CD4-positive, alpha-beta T cell (primary cell): ENCODE measurements at regions of chr16 and their contacts with region 1.

Region 1: GRCh38 chr16:4616047-4616811 is 1.5 kb upstream of the UBALD1 start:
- DNase-seq: peak; percentile 97 to 100 (median 98)
- ATAC-seq: peak; percentile 89
- H3K4me3 ChIP-seq: peak overlapping the region; percentile 76
- H3K4me3 Mint-ChIP-seq: peak overlapping the region; percentile 99
- H3K27ac ChIP-seq: peak overlapping the region; percentile 90 to 97
- H3K27ac Mint-ChIP-seq: peak overlapping the region; percentile 98
- H3K4me1 ChIP-seq: peaks cover 59% of the 10 kb centered on the region
- H3K4me1 Mint-ChIP-seq: peaks cover 26% of the 10 kb centered on the region
- H3K27me3 ChIP-seq: no peaks in the 10 kb centered on the region
- H3K27me3 Mint-ChIP-seq: no peaks in the 10 kb centered on the region
- CTCF ChIP-seq: peak; percentile 65

Region 2: GRCh38 chr16:3134564-3135417 is 1481.4 kb before region 1 on chr16 and contains the start of gene ZNF213:
- CTCF ChIA-PET with region 1: no interaction called
- POLR2A ChIA-PET with region 1: no interaction called
- intact Hi-C with region 1: loop called in 1 of 2 experiments (anchors 10 kb)
- DNase-seq: peak; percentile 79 to 99 (median 89)
- ATAC-seq: peak; percentile 97
- H3K4me3 ChIP-seq: peak within 1 kb of the TSS; percentile 84
- H3K4me3 Mint-ChIP-seq: peak within 1 kb of the TSS; percentile 99
- H3K27ac ChIP-seq: peak within 1 kb of the TSS; percentile 91 to 92
- H3K27ac Mint-ChIP-seq: peak within 1 kb of the TSS; percentile 94
- H3K4me1 ChIP-seq: peaks cover 29% of the 10 kb centered on the region
- H3K4me1 Mint-ChIP-seq: peaks cover 38% of the 10 kb centered on the region
- H3K27me3 ChIP-seq: no peaks in the 10 kb centered on the region
- H3K27me3 Mint-ChIP-seq: no peaks in the 10 kb centered on the region
- CTCF ChIP-seq: no peak
- total RNA-seq, gene ZNF213: 1.6 to 2.2 TPM

Region 3: DNA sequence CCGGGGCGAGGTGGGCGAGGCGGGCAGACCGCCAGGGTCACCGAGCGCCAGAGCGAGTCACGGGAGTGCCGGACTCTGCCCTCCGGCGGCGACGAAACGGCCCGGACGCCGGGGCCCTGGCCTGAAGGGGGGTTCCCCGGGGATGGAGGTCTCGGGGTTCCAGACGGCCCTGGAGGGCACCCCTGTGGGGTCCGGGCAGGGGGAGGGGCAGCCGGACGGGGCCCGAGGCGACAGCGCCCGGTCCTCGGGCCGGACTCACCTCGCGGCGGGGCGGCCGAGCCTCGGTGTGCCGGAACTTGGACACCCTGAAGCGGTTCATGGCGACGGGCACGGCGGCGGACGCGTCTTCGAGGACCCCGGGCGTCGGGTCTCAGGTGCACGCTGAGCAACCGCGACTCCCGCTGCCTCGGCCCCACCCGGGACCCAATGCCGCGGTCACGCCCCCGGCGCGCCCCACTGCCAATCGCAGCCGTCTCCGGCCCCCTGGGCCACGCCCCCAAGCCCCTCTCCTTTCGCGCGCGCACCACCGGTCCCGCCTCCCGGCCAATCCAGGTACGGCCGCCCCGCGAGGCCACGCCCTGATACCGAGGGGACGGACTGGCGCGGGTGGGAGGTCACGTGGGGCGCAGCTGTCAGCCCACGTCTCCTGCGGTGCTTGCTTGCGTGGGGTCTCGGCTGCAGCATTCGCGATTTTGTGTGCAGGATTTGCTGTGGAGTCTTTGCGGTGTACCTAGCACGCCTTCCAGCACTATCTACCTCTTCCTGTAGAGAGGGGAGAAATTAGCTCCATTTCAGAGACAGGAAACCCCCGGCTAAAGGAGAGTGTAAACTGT is 199.8 kb before region 1 on chr16 and contains the start of gene CORO7:
- CTCF ChIA-PET with region 1: no interaction called
- POLR2A ChIA-PET with region 1: interaction called, 5 read pairs
- intact Hi-C with region 1: loop called in 1 of 2 experiments (anchors 10 kb)
- DNase-seq: peak; percentile 98 to 100 (median 99)
- ATAC-seq: peak; percentile 71
- H3K4me3 ChIP-seq: peak within 1 kb of the TSS; percentile 81
- H3K4me3 Mint-ChIP-seq: peak within 1 kb of the TSS; percentile 96
- H3K27ac ChIP-seq: peak within 1 kb of the TSS; percentile 91 to 98
- H3K27ac Mint-ChIP-seq: peak within 1 kb of the TSS; percentile 95
- H3K4me1 ChIP-seq: peaks cover 51% of the 10 kb centered on the region
- H3K4me1 Mint-ChIP-seq: peaks cover 29% of the 10 kb centered on the region
- H3K27me3 ChIP-seq: no peaks in the 10 kb centered on the region
- H3K27me3 Mint-ChIP-seq: no peaks in the 10 kb centered on the region
- CTCF ChIP-seq: no peak
- total RNA-seq, gene CORO7: 801 to 805 TPM

Region 4: GRCh38 chr16:4538350-4539235 is 77.6 kb before region 1 on chr16 and contains the start of gene CDIP1:
- CTCF ChIA-PET with region 1: no interaction called
- POLR2A ChIA-PET with region 1: no interaction called
- intact Hi-C with region 1: loop called in 1 of 2 experiments (anchors 5 kb)
- DNase-seq: peak; percentile 89 to 98 (median 94)
- ATAC-seq: peak; percentile 77
- H3K4me3 ChIP-seq: peak within 1 kb of the TSS; percentile 68
- H3K4me3 Mint-ChIP-seq: peak within 1 kb of the TSS; percentile 91
- H3K27ac ChIP-seq: peak within 1 kb of the TSS; percentile 87 to 89
- H3K27ac Mint-ChIP-seq: peak within 1 kb of the TSS; percentile 89
- H3K4me1 ChIP-seq: peaks cover 47% of the 10 kb centered on the region
- H3K4me1 Mint-ChIP-seq: peaks cover 40% of the 10 kb centered on the region
- H3K27me3 ChIP-seq: no peaks in the 10 kb centered on the region
- H3K27me3 Mint-ChIP-seq: no peaks in the 10 kb centered on the region
- CTCF ChIP-seq: no peak
- total RNA-seq, gene CDIP1: 19.5 to 22.4 TPM

Region 5: GRCh38 chr16:4693296-4693955 is 77.2 kb after region 1 on chr16 and contains the start of gene NUDT16L1:
- CTCF ChIA-PET with region 1: interaction called, 4 read pairs
- POLR2A ChIA-PET with region 1: interaction called, 34 read pairs
- intact Hi-C with region 1: loop called in 1 of 2 experiments (anchors 1 kb)
- DNase-seq: peak in 13 of 14 experiments; percentile 93 to 99 (median 97)
- ATAC-seq: peak; percentile 90
- H3K4me3 ChIP-seq: peak within 1 kb of the TSS; percentile 93
- H3K4me3 Mint-ChIP-seq: peak within 1 kb of the TSS; percentile 91
- H3K27ac ChIP-seq: peak within 1 kb of the TSS; percentile 63 to 81
- H3K27ac Mint-ChIP-seq: peak within 1 kb of the TSS; percentile 89
- H3K4me1 ChIP-seq: peaks cover 25% of the 10 kb centered on the region
- H3K4me1 Mint-ChIP-seq: peaks cover 7% of the 10 kb centered on the region
- H3K27me3 ChIP-seq: no peaks in the 10 kb centered on the region
- H3K27me3 Mint-ChIP-seq: no peaks in the 10 kb centered on the region
- CTCF ChIP-seq: no peak
- total RNA-seq, gene NUDT16L1: 75.2 to 78.9 TPM

Region 6: GRCh38 chr16:4709481-4709880 is 93.3 kb after region 1 on chr16:
- CTCF ChIA-PET with region 1: no interaction called
- POLR2A ChIA-PET with region 1: no interaction called
- intact Hi-C with region 1: no loop called
- DNase-seq: no peak
- ATAC-seq: no peak
- H3K4me3 ChIP-seq: no peak overlapping the region
- H3K4me3 Mint-ChIP-seq: no peak overlapping the region
- H3K27ac ChIP-seq: no peak overlapping the region
- H3K27ac Mint-ChIP-seq: no peak overlapping the region
- H3K4me1 ChIP-seq: no peaks in the 10 kb centered on the region
- H3K4me1 Mint-ChIP-seq: peaks cover 4% of the 10 kb centered on the region
- H3K27me3 ChIP-seq: no peaks in the 10 kb centered on the region
- H3K27me3 Mint-ChIP-seq: no peaks in the 10 kb centered on the region
- CTCF ChIP-seq: no peak

Region 7: GRCh38 chr16:4766874-4767628 is 150.8 kb after region 1 on chr16 and contains the start of gene ZNF500:
- CTCF ChIA-PET with region 1: no interaction called
- POLR2A ChIA-PET with region 1: interaction called, 15 read pairs
- intact Hi-C with region 1: no loop called
- DNase-seq: peak; percentile 90 to 99 (median 96)
- ATAC-seq: peak; percentile 90
- H3K4me3 ChIP-seq: peak within 1 kb of the TSS; percentile 80
- H3K4me3 Mint-ChIP-seq: peak within 1 kb of the TSS; percentile 96
- H3K27ac ChIP-seq: peak within 1 kb of the TSS; percentile 52 to 69
- H3K27ac Mint-ChIP-seq: peak within 1 kb of the TSS; percentile 90
- H3K4me1 ChIP-seq: peaks cover 41% of the 10 kb centered on the region
- H3K4me1 Mint-ChIP-seq: peaks cover 32% of the 10 kb centered on the region
- H3K27me3 ChIP-seq: no peaks in the 10 kb centered on the region
- H3K27me3 Mint-ChIP-seq: no peaks in the 10 kb centered on the region
- CTCF ChIP-seq: no peak
- total RNA-seq, gene ZNF500: 11.8 to 12.4 TPM

Region 8: GRCh38 chr16:4846891-4847773 is 230.9 kb after region 1 on chr16 and contains the starts of genes GLYR1 and UBN1:
- CTCF ChIA-PET with region 1: interaction called, 3 read pairs
- POLR2A ChIA-PET with region 1: interaction called, 5 read pairs
- intact Hi-C with region 1: loop called in 1 of 2 experiments (anchors 2 kb)
- DNase-seq: peak; percentile 98 to 100 (median 99)
- ATAC-seq: peak; percentile 90
- H3K4me3 ChIP-seq: peak within 1 kb of the TSS; percentile 95
- H3K4me3 Mint-ChIP-seq: peak within 1 kb of the TSS; percentile 93
- H3K27ac ChIP-seq: peak within 1 kb of the TSS; percentile 75 to 93
- H3K27ac Mint-ChIP-seq: peak within 1 kb of the TSS; percentile 85
- H3K4me1 ChIP-seq: peaks cover 46% of the 10 kb centered on the region
- H3K4me1 Mint-ChIP-seq: peaks cover 57% of the 10 kb centered on the region
- H3K27me3 ChIP-seq: no peaks in the 10 kb centered on the region
- H3K27me3 Mint-ChIP-seq: no peaks in the 10 kb centered on the region
- CTCF ChIP-seq: no peak
- total RNA-seq, gene GLYR1: 71.7 to 77.2 TPM
- total RNA-seq, gene UBN1: 45.7 to 45.8 TPM